SK-N-SH (cell line): ENCODE measurements at regions of chr16 and their contacts with region 1.

Region 1: GRCh38 chr16:19907161-19907992 is 22.7 kb upstream of the GPRC5B start:
- DNase-seq: peak; percentile 79
- H3K4me3 ChIP-seq: peak overlapping the region in 1 of 2 experiments; percentile 46; a peak in 1 of 4 replicates
- H3K27ac ChIP-seq: no peak overlapping the region; a peak in 1 of 4 replicates
- H3K4me1 ChIP-seq: no peaks in the 10 kb centered on the region; a peak in 1 of 4 replicates
- H3K27me3 ChIP-seq: no peaks in the 10 kb centered on the region; the same call in 1 of the 2 replicates
- CTCF ChIP-seq: peak; percentile 96
- EP300 ChIP-seq: no peak
- RAD21 ChIP-seq: peak; percentile 92

Region 2: DNA sequence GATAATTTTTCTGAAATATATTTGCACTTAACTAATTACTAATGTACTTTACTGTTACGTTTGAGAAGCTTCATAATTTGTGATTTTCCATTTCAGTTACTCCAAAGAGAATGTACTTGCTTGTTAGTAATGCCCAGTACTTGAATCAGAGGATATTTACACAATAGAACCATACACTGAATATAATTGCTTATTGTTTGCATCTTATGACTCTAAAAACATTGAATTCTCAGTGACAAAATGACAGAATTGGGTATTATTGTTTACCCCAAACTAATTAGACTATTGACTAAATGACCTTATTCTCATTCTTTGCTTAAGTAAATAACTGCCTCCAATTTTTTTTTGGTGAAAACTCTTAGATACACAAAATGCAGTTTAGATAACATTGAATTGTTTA is 374.8 kb before region 1 on chr16:
- CTCF ChIA-PET with region 1: no interaction called
- POLR2A ChIA-PET with region 1: no interaction called
- DNase-seq: no peak
- H3K4me3 ChIP-seq: no peak overlapping the region
- H3K27ac ChIP-seq: no peak overlapping the region
- H3K4me1 ChIP-seq: no peaks in the 10 kb centered on the region
- H3K27me3 ChIP-seq: no peaks in the 10 kb centered on the region
- CTCF ChIP-seq: no peak
- EP300 ChIP-seq: no peak
- RAD21 ChIP-seq: no peak

Region 3: GRCh38 chr16:19868421-19868820 is 39.0 kb before region 1 on chr16:
- CTCF ChIA-PET with region 1: no interaction called
- POLR2A ChIA-PET with region 1: no interaction called
- DNase-seq: no peak
- H3K4me3 ChIP-seq: no peak overlapping the region
- H3K27ac ChIP-seq: no peak overlapping the region
- H3K4me1 ChIP-seq: no peaks in the 10 kb centered on the region
- H3K27me3 ChIP-seq: no peaks in the 10 kb centered on the region
- CTCF ChIP-seq: no peak
- EP300 ChIP-seq: no peak
- RAD21 ChIP-seq: no peak

Region 4: DNA sequence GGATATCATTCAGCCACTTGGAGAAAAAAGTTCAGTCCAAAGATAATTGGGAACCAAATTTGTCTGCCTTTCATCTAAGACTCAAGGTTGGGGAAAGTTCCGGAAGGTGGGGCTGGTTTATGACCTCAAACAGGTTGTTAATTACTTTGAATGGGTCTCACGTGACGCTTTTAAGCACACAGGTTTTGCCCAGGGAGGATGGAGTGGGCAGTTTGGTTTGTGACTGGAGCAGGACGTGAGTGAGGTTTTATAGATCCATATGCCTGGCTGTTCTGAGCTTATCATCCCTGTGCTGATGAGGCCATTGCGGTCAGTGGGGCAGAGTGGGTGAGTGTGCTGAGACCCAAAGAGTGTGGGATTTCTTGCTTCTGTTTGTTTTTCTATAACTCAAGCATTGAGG is 16.0 kb after region 1 on chr16:
- CTCF ChIA-PET with region 1: interaction called, 32 read pairs
- POLR2A ChIA-PET with region 1: no interaction called
- DNase-seq: no peak
- H3K4me3 ChIP-seq: no peak overlapping the region
- H3K27ac ChIP-seq: no peak overlapping the region
- H3K4me1 ChIP-seq: no peaks in the 10 kb centered on the region
- H3K27me3 ChIP-seq: no peaks in the 10 kb centered on the region
- CTCF ChIP-seq: no peak
- EP300 ChIP-seq: no peak
- RAD21 ChIP-seq: no peak

Region 5: DNA sequence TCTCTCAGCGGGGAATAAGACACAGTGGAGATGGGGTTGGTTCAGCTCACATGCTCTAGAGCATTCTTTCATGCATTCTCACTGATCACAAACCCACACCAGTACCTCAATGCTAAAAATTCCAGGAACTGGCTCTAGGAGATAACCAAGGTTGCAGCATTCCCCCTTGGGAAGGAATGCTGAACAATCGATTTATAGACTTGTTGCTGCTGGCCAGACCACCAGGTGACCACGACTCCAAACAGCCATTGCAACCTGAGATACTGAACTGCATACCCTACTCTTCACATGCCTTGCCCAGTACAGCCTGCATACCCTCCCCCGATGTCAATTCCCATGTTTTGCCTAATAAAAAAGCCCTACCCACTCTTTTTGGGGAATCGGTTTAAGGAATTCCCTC is 52.4 kb after region 1 on chr16:
- CTCF ChIA-PET with region 1: interaction called, 10 read pairs
- POLR2A ChIA-PET with region 1: no interaction called
- DNase-seq: no peak
- H3K4me3 ChIP-seq: no peak overlapping the region
- H3K27ac ChIP-seq: no peak overlapping the region
- H3K4me1 ChIP-seq: no peaks in the 10 kb centered on the region; a peak in 1 of 4 replicates
- H3K27me3 ChIP-seq: no peaks in the 10 kb centered on the region
- CTCF ChIP-seq: no peak
- EP300 ChIP-seq: no peak
- RAD21 ChIP-seq: no peak

Region 6: GRCh38 chr16:20001856-20002707 is 94.7 kb after region 1 on chr16:
- CTCF ChIA-PET with region 1: interaction called, 32 read pairs
- POLR2A ChIA-PET with region 1: interaction called, 13 read pairs
- DNase-seq: peak; percentile 48
- H3K4me3 ChIP-seq: no peak overlapping the region
- H3K27ac ChIP-seq: peak overlapping the region in 1 of 2 experiments; percentile 83; a peak in 2 of 4 replicates
- H3K4me1 ChIP-seq: peaks cover 0 to 22% of the 10 kb centered on the region in 2 experiments; a peak in 1 of 4 replicates
- H3K27me3 ChIP-seq: no peaks in the 10 kb centered on the region
- CTCF ChIP-seq: no peak
- EP300 ChIP-seq: peak in 1 of 2 experiments; percentile 51; a peak in 1 of 4 replicates
- RAD21 ChIP-seq: no peak

Region 7: DNA sequence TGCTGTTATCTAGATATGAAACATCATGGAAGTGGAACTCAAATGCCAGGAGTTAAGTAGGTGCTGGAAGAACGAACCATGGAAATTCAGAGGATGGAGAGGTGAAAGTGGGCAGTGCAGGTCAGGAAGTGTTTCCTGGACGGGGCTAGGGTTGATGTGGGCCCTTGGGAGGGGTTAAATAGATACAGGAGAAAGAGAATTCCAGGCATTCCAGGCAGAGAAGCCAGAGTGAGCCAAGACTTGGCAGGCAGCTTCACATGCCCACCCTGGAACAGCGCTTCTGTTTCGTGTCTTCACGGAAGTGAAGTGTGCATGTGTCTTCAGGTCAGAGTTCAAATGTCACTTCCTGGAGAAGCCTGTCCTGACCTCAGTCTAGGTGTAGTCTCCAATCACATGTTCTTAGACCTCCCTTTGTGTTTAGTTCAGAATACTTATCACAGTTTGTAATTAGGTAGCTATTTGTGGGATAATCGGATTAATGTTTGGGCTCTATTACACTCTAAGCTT is 378.7 kb after region 1 on chr16:
- CTCF ChIA-PET with region 1: interaction called, 473 read pairs
- POLR2A ChIA-PET with region 1: no interaction called
- DNase-seq: no peak
- H3K4me3 ChIP-seq: no peak overlapping the region
- H3K27ac ChIP-seq: no peak overlapping the region
- H3K4me1 ChIP-seq: no peaks in the 10 kb centered on the region; a peak in 1 of 4 replicates
- H3K27me3 ChIP-seq: no peaks in the 10 kb centered on the region
- CTCF ChIP-seq: no peak
- EP300 ChIP-seq: no peak
- RAD21 ChIP-seq: no peak

Region 8: DNA sequence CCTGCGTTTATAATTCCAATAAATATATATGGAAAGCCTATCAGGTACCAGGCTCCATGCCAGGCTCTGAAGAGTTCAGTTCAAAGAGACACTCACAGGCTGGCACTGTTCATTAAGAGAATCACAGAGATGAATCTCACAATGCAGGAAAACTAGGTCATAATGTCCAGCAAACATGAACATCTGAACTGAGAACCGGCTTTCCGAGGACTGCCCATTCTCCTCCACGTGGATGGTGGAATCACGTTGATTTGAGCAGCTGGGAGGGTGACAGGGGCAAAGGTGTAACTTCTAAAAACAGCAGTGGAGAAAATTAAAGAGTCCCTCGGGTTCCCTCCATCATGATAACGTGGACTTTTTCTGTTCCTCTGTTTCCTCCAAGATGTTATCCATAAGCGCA is 409.7 kb after region 1 on chr16:
- CTCF ChIA-PET with region 1: interaction called, 10 read pairs
- POLR2A ChIA-PET with region 1: no interaction called
- DNase-seq: no peak
- H3K4me3 ChIP-seq: no peak overlapping the region
- H3K27ac ChIP-seq: no peak overlapping the region
- H3K4me1 ChIP-seq: no peaks in the 10 kb centered on the region
- H3K27me3 ChIP-seq: no peaks in the 10 kb centered on the region
- CTCF ChIP-seq: no peak
- EP300 ChIP-seq: no peak
- RAD21 ChIP-seq: no peak